K562 (cell line): ENCODE measurements at regions of chr4 and their contacts with region 1.

Region 1: GRCh38 chr4:75995727-75996126 is 5.0 kb upstream of the SDAD1 start:
- DNase-seq: peak; percentile 36 to 60 (median 42)
- ATAC-seq: peak; percentile 53
- H3K4me3 ChIP-seq: no peak overlapping the region
- H3K27ac ChIP-seq: no peak overlapping the region
- H3K4me1 ChIP-seq: peaks cover 0 to 3% of the 10 kb centered on the region in 2 experiments; a peak in 2 of 5 replicates
- H3K27me3 ChIP-seq: no peaks in the 10 kb centered on the region
- CTCF ChIP-seq: peak; percentile 41 to 75 (median 54); a peak in 5 of 6 replicates
- EP300 ChIP-seq: no peak
- POLR2A ChIP-seq: no peak
- RAD21 ChIP-seq: peak; percentile 81

Region 2: GRCh38 chr4:76087007-76087769 is 91.5 kb after region 1 on chr4:
- CTCF ChIA-PET with region 1: no interaction called
- POLR2A ChIA-PET with region 1: no interaction called
- in situ Hi-C with region 1: no loop called
- intact Hi-C with region 1: loop called (anchors 1 kb)
- DNase-seq: peak; percentile 55 to 84 (median 66)
- ATAC-seq: peak; percentile 92
- H3K4me3 ChIP-seq: no peak overlapping the region
- H3K27ac ChIP-seq: peak overlapping the region; percentile 41; the same call in 1 of the 3 replicates
- H3K4me1 ChIP-seq: peaks cover 0 to 15% of the 10 kb centered on the region in 2 experiments; a peak in 4 of 5 replicates
- H3K27me3 ChIP-seq: no peaks in the 10 kb centered on the region
- CTCF ChIP-seq: peak; percentile 79 to 88 (median 82)
- EP300 ChIP-seq: no peak
- POLR2A ChIP-seq: no peak
- RAD21 ChIP-seq: peak; percentile 76 to 82

Region 3: DNA sequence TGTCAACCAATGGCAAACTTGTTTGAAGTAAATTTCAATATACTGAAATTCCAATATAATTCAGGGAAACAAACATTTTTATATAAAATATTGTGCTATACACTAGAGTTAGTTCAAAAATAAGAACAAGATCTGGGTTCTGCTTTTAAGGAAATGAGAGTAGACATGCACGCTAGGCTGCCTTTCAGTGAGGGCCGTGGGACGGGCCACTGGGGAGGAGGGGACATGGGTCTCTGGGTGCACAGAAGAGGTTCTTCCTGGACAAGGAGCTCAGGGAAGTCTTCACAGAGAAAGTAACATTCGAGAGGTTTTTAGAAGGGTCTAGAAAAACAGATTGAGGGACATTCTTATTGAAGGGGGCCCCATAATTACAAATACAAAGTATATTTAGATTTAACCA is 503.7 kb after region 1 on chr4:
- CTCF ChIA-PET with region 1: interaction called, 3 read pairs
- POLR2A ChIA-PET with region 1: no interaction called
- in situ Hi-C with region 1: no loop called
- intact Hi-C with region 1: loop called (anchors 5 kb)
- DNase-seq: no peak
- ATAC-seq: no peak
- H3K4me3 ChIP-seq: no peak overlapping the region
- H3K27ac ChIP-seq: no peak overlapping the region
- H3K4me1 ChIP-seq: no peaks in the 10 kb centered on the region
- H3K27me3 ChIP-seq: peaks cover 2 to 21% of the 10 kb centered on the region in 2 experiments; a peak in 4 of 5 replicates
- CTCF ChIP-seq: no peak
- EP300 ChIP-seq: no peak
- POLR2A ChIP-seq: no peak
- RAD21 ChIP-seq: no peak